Activated B cell treated with CpG ODN at 0.5 μM for 24 hours (primary cell): ENCODE measurements at regions of chr1 and their contacts with region 1.

Region 1: DNA sequence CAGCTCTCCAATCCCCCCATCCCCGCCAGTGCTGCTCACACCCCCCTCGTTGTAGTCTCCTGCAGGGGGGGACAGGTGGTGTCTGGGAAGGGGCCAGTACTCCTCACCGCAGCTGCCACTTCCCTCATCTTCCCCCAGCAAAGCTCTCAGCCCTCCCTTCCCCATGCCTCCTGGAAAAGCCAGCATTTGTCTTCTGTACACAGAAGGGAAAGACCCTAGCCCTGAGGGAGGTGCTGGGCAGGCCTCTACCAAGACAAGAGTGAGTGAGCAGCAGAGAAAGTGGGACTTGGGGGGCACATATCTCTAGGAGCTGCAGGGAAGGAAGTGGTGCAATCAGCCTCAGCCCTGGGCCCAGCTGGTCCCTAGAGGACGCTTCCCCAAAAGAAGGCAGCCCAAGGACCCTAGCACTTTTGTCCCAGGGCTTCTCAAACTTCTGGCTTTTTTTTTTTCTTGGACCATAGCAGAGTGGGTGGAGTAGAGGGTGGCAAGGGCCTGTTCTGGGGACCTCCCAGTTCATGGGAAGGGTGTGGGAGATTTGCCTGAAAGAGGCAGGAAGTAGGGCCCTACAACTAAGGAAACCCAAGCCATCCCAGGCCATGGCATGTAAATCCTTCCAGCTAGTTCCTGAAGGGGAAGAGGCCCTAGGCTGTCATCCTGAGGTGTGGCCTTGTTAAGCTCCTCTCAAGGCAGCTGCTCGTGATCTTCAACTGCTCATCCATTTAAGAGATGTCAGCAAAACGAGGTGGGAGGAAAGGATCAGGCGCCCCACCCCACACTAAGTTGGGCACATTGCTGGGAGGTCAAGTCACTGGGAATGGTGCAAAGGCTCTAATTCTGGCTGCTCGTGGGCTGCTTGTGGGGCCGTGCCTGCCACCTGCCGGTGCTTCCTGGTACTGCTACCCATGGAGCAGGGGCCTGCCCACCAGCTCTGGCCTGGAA is 12.6 kb downstream of the ZC3H12A start:
- DNase-seq: peak; percentile 81
- ATAC-seq: peak; percentile 78
- H3K4me3 Mint-ChIP-seq: no peak overlapping the region
- H3K27ac Mint-ChIP-seq: peak overlapping the region; percentile 74
- H3K4me1 Mint-ChIP-seq: peaks cover 27% of the 10 kb centered on the region
- H3K27me3 Mint-ChIP-seq: no peaks in the 10 kb centered on the region
- CTCF ChIP-seq: peak; percentile 90

Region 2: GRCh38 chr1:37449936-37450335 is 37.0 kb before region 1 on chr1:
- CTCF ChIA-PET with region 1: interaction called, 261 read pairs
- POLR2A ChIA-PET with region 1: interaction called, 29 read pairs
- intact Hi-C with region 1: loop called (anchors 1 kb)
- DNase-seq: no peak
- ATAC-seq: peak; percentile 63
- H3K4me3 Mint-ChIP-seq: no peak overlapping the region
- H3K27ac Mint-ChIP-seq: no peak overlapping the region
- H3K4me1 Mint-ChIP-seq: peaks cover 10% of the 10 kb centered on the region
- H3K27me3 Mint-ChIP-seq: peaks cover 8% of the 10 kb centered on the region
- CTCF ChIP-seq: no peak

Region 3: DNA sequence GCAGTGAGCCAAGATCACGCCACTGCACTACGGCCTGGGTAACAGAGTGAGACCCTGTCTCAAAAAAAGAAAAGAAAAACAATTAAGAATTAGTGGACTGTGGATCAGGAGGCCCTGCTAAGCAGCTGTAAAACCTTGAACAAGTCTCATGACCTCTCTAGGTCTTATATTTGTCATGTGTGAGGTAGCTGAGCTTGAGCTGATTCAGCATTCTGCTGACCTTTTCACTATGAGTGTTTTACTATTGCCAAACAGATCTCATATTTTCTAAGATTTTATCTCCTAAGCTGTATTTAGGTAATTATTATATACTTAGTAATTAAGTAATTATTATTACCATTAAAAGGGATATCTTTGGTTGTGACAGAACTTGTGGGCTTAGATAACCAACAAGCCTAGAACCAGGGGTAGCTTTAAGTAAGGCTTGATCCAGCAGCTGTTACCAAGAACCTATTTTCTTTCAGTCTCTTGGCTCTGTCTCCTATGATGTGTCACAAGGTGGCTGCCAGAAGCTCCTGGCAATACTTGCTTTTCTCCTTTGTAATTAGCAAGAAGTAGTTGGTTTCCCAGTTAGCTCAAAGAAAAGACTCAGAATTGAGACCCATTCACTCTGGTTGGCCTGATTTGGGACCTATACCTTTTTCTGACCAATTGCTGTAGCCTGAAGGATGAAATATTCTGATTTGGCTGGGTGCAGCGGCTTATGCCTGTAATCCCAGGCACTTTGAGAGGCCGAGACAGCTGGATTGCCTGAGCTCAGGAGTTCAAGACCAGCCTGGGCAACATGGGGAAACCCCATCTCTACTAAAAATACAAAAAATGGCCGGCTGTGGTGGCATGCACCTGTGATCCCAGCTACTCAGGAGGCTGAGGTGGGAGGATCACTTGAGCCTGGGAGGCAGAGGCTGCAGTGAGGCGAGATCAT is 21.1 kb before region 1 on chr1:
- CTCF ChIA-PET with region 1: interaction called, 261 read pairs
- POLR2A ChIA-PET with region 1: interaction called, 5 read pairs
- intact Hi-C with region 1: no loop called
- DNase-seq: no peak
- ATAC-seq: no peak
- H3K4me3 Mint-ChIP-seq: no peak overlapping the region
- H3K27ac Mint-ChIP-seq: no peak overlapping the region
- H3K4me1 Mint-ChIP-seq: no peaks in the 10 kb centered on the region
- H3K27me3 Mint-ChIP-seq: peaks cover 2% of the 10 kb centered on the region
- CTCF ChIP-seq: no peak

Region 4: GRCh38 chr1:37498872-37499617 is 12.1 kb after region 1 on chr1:
- CTCF ChIA-PET with region 1: interaction called, 23 read pairs
- POLR2A ChIA-PET with region 1: interaction called, 4 read pairs
- intact Hi-C with region 1: no loop called
- DNase-seq: no peak
- ATAC-seq: no peak
- H3K4me3 Mint-ChIP-seq: no peak overlapping the region
- H3K27ac Mint-ChIP-seq: no peak overlapping the region
- H3K4me1 Mint-ChIP-seq: no peaks in the 10 kb centered on the region
- H3K27me3 Mint-ChIP-seq: no peaks in the 10 kb centered on the region
- CTCF ChIP-seq: no peak

Region 5: GRCh38 chr1:37682334-37682987 is 195.5 kb after region 1 on chr1:
- CTCF ChIA-PET with region 1: interaction called, 23 read pairs
- POLR2A ChIA-PET with region 1: interaction called, 5 read pairs
- intact Hi-C with region 1: no loop called
- DNase-seq: peak; percentile 59
- ATAC-seq: peak; percentile 96
- H3K4me3 Mint-ChIP-seq: no peak overlapping the region
- H3K27ac Mint-ChIP-seq: peak overlapping the region; percentile 77
- H3K4me1 Mint-ChIP-seq: peaks cover 6% of the 10 kb centered on the region
- H3K27me3 Mint-ChIP-seq: no peaks in the 10 kb centered on the region
- CTCF ChIP-seq: peak; percentile 91